ENCODE measurements at regions of chr14 and their contacts with region 1.

Region 1: DNA sequence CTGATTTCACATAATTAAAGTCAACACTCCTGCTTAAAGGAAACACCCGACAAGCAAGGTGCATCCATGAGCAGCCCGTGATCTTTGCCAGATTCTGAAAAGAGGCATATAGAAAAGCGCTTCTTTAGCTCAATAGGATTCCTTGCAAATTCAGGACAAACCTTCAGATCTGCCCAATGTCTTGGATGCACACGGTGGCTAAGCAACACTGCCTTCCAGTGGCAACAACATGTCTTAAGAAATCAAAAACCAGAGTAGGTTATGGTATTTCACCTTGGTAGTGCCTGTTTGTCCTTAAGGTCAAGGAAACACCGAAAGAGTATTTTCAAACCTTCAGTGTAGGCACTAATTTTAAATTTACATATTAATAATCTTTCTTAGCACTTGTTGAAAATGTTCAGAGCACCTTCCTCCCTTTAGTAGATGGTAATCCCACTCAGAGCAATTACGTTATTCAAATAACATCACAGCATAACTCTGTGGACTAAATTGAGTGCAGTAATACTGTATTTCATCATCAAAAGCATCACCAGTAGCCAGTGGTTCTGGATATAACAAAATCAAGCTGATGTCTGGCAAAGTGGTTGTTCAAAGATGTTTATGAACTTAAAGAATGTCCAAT is 58.0 kb upstream of the CDKN3 start:
- DNase-seq: peak; percentile 57
- ATAC-seq: peak; percentile 78
- H3K4me3 ChIP-seq: no peak overlapping the region
- H3K27ac ChIP-seq: no peak overlapping the region
- H3K4me1 ChIP-seq: no peaks in the 10 kb centered on the region; the same call in 1 of the 2 replicates
- H3K27me3 ChIP-seq: peaks cover 9% of the 10 kb centered on the region
- CTCF ChIP-seq: peak; percentile 63
- POLR2A ChIP-seq: no peak
- RAD21 ChIP-seq: peak; percentile 77

Region 2: GRCh38 chr14:53640685-53641084 is 698.1 kb before region 1 on chr14:
- CTCF ChIA-PET with region 1: no interaction called
- POLR2A ChIA-PET with region 1: no interaction called
- dilution Hi-C with region 1: no loop called
- in situ Hi-C with region 1: no loop called
- intact Hi-C with region 1: loop called (anchors 10 kb)
- DNase-seq: peak; percentile 75
- ATAC-seq: peak; percentile 74
- H3K4me3 ChIP-seq: no peak overlapping the region
- H3K27ac ChIP-seq: no peak overlapping the region
- H3K4me1 ChIP-seq: peaks cover 4% of the 10 kb centered on the region
- H3K27me3 ChIP-seq: peaks cover 9% of the 10 kb centered on the region
- CTCF ChIP-seq: no peak
- POLR2A ChIP-seq: no peak
- RAD21 ChIP-seq: no peak

Region 3: GRCh38 chr14:54509546-54510501 is 171.0 kb after region 1 on chr14 and contains the start of gene CGRRF1:
- CTCF ChIA-PET with region 1: no interaction called
- POLR2A ChIA-PET with region 1: no interaction called
- dilution Hi-C with region 1: no loop called
- in situ Hi-C with region 1: no loop called
- intact Hi-C with region 1: no loop called
- DNase-seq: peak; percentile 98
- ATAC-seq: peak; percentile 99
- H3K4me3 ChIP-seq: peak within 1 kb of the TSS; percentile 84
- H3K27ac ChIP-seq: peak within 1 kb of the TSS; percentile 90
- H3K4me1 ChIP-seq: peaks cover 2% of the 10 kb centered on the region; the same call in 1 of the 2 replicates
- H3K27me3 ChIP-seq: peaks cover 3% of the 10 kb centered on the region; the same call in 1 of the 2 replicates
- CTCF ChIP-seq: peak; percentile 48
- POLR2A ChIP-seq: peak; percentile 65; the same call in 1 of the 2 replicates
- RAD21 ChIP-seq: no peak; the same call in 1 of the 2 replicates
- total RNA-seq, gene CGRRF1: 13.8 and 15.3 TPM in 2 replicates

Region 4: DNA sequence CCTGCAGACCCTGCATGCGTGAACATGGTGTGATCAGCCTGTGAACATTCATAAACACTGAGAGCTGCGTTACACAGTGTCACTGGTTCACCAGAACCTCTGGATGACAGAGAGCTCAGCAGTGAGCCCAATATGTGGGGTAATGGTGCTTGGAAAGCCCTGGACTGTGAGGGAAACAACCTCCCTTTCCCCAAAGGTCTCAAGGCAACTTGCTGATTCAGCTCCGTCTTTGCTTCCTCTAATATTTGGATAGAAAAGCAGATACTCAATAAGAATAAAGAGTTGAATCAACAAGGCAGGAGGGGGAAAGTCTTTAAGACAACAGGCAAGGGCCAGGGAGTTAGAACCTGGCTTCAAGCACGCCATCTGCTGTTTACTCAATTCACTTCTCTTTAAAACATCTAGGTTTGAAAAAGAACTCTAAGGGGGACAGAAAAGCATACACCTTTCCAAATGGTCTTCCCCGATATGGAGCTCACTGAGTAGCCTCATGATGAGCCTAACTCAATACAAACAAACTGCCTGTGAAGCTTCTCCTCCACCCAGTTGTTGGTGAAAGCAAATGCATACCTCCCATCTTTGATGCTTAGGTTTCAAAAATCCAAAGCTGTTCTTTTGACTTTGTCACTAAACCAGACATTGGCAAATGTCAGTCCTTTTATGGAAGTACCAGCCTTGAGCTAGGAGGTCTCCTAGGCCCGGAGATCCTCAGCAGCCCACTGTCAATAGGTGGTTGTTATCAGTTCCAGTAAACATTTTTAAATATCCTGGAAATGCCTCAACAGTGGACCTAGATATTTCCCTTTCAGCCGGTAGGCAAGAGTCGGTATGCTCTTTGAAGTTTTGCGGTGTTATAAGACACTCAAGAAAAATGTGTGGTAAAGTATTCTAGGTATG is 304.2 kb after region 1 on chr14:
- CTCF ChIA-PET with region 1: no interaction called
- POLR2A ChIA-PET with region 1: no interaction called
- dilution Hi-C with region 1: no loop called
- in situ Hi-C with region 1: no loop called
- intact Hi-C with region 1: no loop called
- DNase-seq: peak; percentile 46
- ATAC-seq: peak; percentile 25
- H3K4me3 ChIP-seq: no peak overlapping the region
- H3K27ac ChIP-seq: peak overlapping the region; percentile 26; the same call in 1 of the 2 replicates
- H3K4me1 ChIP-seq: peaks cover 22% of the 10 kb centered on the region
- H3K27me3 ChIP-seq: no peaks in the 10 kb centered on the region
- CTCF ChIP-seq: peak; percentile 36; the same call in 1 of the 2 replicates
- POLR2A ChIP-seq: no peak
- RAD21 ChIP-seq: peak; percentile 50

Measured in IMR-90 (cell line).